ENCODE measurements at regions of chr20 and their contacts with region 1.

Region 1: DNA sequence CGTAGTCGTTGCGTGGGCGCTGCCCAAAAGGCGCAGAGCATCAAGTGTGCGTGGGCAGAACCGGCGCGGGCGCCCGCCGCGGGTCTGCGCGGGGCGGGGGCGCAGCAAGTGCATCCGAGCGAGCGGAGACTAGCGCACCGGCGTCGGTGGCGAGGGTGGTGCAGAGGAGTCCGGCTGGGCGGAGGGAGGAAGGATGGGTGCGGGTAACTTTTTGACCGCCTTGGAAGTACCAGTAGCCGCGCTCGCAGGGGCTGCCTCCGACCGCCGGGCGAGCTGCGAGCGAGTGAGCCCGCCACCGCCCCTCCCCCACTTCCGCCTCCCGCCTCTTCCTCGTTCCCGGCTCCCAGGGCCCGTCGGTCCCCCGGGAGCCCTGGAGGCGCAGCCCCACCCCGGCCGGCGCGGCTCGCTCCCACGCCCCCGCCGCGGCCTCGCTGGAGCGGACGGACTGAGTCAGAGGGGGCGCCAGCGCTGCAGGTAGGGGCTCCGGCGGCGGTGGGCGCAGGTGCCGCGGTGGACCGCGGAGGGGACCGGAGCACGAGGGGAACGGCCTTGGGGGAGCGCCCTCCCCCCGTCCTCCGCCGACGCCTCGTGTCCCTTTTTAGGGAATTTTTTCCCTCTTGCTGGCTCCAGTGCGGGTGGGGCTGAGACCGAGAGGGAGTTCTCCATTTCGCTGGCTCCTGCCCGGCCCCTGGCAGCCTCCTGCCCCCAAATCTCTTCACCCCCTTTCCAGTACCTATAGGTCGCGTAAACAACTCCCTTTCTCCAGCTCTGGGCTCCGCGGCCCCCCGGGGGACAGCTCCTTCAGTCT is 1.6 kb upstream of the DBNDD2 start:
- DNase-seq: peak; percentile 91
- H3K4me3 ChIP-seq: peak overlapping the region; percentile 84 to 97 (median 92)
- H3K27ac ChIP-seq: peak overlapping the region; percentile 94 to 99 (median 97)
- H3K4me1 ChIP-seq: peaks cover 0 to 42% (median 25%) of the 10 kb centered on the region in 4 donors
- H3K27me3 ChIP-seq: no peaks in the 10 kb centered on the region
- CTCF ChIP-seq: no peak
- EP300 ChIP-seq: no peak
- POLR2A ChIP-seq: peak in 1 of 2 donors; percentile 9

Region 2: DNA sequence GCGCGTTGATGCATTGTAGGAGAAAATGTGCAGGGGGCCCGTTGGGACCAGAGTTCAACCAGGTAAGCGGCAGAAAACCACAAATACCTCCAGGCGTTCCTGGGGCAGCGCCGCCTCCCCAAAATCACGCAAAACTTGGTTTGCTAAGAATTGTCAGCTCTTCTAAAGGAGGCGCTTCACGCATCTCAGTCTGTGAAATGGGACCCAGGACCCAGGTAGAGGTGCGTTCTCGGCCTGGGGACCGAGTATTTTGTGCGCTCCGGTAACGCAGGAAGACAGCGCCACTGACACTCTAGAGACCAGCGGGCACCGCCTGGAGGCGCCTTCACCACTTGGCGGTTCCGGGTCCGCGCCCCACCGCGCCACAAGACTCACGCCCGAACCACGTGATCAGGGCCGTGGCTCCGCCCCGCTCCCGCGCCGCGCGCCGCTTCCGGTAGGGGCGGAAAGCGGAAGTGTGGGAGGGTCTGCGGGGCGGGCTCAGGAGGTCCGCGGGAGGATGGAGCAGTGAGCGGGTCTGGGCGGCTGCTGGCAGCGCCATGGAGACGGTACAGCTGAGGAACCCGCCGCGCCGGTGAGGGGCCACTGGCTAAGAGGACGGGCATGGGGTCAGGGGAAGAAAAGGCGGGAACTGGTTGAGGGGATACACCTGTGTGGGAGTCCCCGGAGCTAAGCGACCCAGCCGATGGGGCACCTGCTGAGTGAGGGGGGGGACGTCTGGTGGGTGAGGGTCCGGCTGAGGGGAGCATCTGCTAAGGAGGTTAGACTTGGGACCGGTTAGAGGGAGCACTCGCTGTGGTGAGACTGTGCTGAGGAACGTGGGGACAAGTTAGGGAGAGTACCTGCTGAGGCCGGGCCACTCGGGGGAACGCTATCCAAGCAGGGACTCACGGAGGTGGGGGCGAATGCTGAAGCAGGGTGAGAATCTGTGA is 440.2 kb before region 1 on chr20 and contains the start of gene STK4:
- intact Hi-C with region 1: loop called (anchors 10 kb)
- DNase-seq: peak; percentile 95
- H3K4me3 ChIP-seq: peak within 1 kb of the TSS; percentile 59 to 82 (median 80)
- H3K27ac ChIP-seq: peak within 1 kb of the TSS; percentile 83 to 85 (median 85)
- H3K4me1 ChIP-seq: peaks cover 0 to 40% (median 32%) of the 10 kb centered on the region in 4 donors
- H3K27me3 ChIP-seq: no peaks in the 10 kb centered on the region
- CTCF ChIP-seq: peak; percentile 15 to 47 (median 42)
- EP300 ChIP-seq: peak in 1 of 4 donors; percentile 65
- POLR2A ChIP-seq: peak; percentile 83 to 91
- total RNA-seq, gene STK4: 23.9 to 31.8 (median 28.1) TPM

Region 3: GRCh38 chr20:45300961-45301360 is 105.5 kb before region 1 on chr20:
- intact Hi-C with region 1: no loop called
- DNase-seq: no peak
- H3K4me3 ChIP-seq: no peak overlapping the region
- H3K27ac ChIP-seq: no peak overlapping the region
- H3K4me1 ChIP-seq: no peaks in the 10 kb centered on the region
- H3K27me3 ChIP-seq: peaks cover 0 to 38% (median 17%) of the 10 kb centered on the region in 3 donors
- CTCF ChIP-seq: no peak
- EP300 ChIP-seq: no peak
- POLR2A ChIP-seq: no peak

Region 4: DNA sequence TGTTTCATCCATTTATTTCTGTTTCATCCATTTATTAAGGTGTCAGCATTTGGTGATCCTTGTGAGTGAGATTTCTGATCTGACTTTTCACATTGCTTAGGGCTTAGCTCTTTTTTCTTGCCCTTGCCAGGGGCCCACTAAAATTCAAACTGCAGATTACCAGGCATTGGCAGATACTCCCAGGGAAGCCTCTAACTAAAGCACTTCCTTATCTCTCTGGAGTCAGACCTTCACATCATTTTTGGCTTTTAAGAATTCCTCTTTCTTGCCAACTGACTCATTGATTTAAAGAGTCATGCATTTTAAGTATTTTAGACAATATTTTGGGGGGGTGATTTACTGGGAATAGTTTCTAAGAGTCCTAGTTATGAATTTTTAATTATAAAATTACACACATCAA is 175.2 kb after region 1 on chr20:
- intact Hi-C with region 1: no loop called
- DNase-seq: no peak
- H3K4me3 ChIP-seq: no peak overlapping the region
- H3K27ac ChIP-seq: no peak overlapping the region
- H3K4me1 ChIP-seq: peaks cover 0 to 4% (median 0%) of the 10 kb centered on the region in 4 donors
- H3K27me3 ChIP-seq: no peaks in the 10 kb centered on the region
- CTCF ChIP-seq: no peak
- EP300 ChIP-seq: no peak
- POLR2A ChIP-seq: no peak

Measured in sigmoid colon (tissue), 7 donors.